ENCODE measurements at regions of chr5 and their contacts with region 1.

Region 1: DNA sequence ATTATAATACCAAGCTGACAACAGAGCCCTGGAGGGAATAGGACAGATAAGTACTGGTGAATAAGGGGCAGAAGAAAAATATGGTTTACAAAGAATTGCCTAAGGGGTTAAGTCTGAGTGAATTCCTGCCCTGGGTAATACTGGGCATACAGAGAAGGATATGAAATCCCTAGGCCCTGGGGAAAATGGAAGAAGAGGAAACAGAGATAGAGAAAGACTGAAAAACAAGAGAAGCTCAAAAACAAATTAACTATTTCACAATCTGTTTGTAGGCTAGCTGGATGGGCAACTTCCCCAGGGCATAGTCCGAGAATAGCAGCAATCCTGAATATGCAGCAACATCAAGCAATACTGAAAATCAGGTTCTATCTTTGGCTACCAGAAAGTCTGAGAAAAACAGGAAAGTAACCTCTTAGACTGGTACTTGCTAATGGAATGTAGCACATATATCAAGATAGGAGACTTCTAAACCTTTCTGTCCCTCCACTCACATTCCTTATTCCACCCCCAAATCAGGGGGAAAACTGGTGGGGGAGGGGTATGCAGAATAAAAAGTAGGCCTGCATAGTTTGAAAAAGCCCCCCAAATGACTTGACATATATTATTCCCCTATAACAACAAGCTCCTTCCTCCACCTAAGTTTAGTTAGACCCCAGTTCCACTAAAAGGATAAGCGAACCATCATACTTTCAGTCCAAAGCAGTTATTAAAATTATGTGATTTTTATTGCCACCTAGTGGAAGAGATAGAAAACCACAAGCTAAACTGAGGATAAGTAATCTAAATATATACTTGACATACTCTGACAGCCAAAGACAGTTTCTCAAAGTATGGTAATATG is 20.6 kb downstream of the SLC38A9 start:
- DNase-seq: no peak
- H3K4me3 ChIP-seq: no peak overlapping the region
- H3K27ac ChIP-seq: peak overlapping the region; percentile 36 to 71
- H3K4me1 ChIP-seq: no peaks in the 10 kb centered on the region
- H3K27me3 ChIP-seq: no peaks in the 10 kb centered on the region
- CTCF ChIP-seq: peak; percentile 63 to 75 (median 64)
- POLR2A ChIP-seq: no peak

Region 2: GRCh38 chr5:55407059-55407684 is 284.3 kb before region 1 on chr5:
- intact Hi-C with region 1: loop called (anchors 10 kb)
- DNase-seq: no peak
- H3K4me3 ChIP-seq: no peak overlapping the region
- H3K27ac ChIP-seq: no peak overlapping the region
- H3K4me1 ChIP-seq: no peaks in the 10 kb centered on the region
- H3K27me3 ChIP-seq: no peaks in the 10 kb centered on the region
- CTCF ChIP-seq: peak; percentile 58 to 72 (median 68)
- POLR2A ChIP-seq: no peak

Measured in uterus (tissue), 4 donors.